PC-9 (cell line): ENCODE measurements at regions of chr9 and their contacts with region 1.

Region 1: GRCh38 chr9:99906403-99907207 is at the start of gene STX17:
- DNase-seq: peak; percentile 57 to 83
- H3K4me3 ChIP-seq: peak within 1 kb of the TSS; percentile 87
- H3K27ac ChIP-seq: peak within 1 kb of the TSS; percentile 86
- H3K4me1 ChIP-seq: peaks cover 16% of the 10 kb centered on the region
- H3K27me3 ChIP-seq: no peaks in the 10 kb centered on the region
- CTCF ChIP-seq: no peak
- total RNA-seq, gene STX17: 46.3 and 47.8 TPM in 2 replicates

Region 2: DNA sequence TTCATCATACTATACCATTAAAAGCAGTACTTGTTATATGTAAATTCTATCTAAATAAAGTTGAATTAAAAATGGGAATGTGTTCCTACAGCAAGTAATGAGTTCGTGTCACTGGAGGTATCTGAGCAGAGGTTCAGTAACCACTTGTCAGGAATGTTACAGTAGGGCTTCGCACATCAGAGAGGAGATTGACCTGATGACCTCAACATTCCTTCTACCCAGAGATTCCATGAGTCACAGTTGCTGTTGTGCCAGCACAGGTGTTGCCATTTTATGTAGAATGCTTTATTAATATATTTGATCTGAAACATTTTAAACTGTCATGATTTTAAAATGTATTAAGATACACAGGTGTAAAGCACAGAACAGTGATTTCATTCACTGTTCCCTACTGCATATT is 60.1 kb after region 1 on chr9:
- CTCF ChIA-PET with region 1: no interaction called
- POLR2A ChIA-PET with region 1: no interaction called
- intact Hi-C with region 1: loop called (anchors 2 kb)
- DNase-seq: peak; percentile 44 to 84
- H3K4me3 ChIP-seq: no peak overlapping the region
- H3K27ac ChIP-seq: peak overlapping the region; percentile 13; the same call in 1 of the 2 replicates
- H3K4me1 ChIP-seq: peaks cover 10% of the 10 kb centered on the region
- H3K27me3 ChIP-seq: no peaks in the 10 kb centered on the region
- CTCF ChIP-seq: no peak

Region 3: GRCh38 chr9:100098887-100099721 is 192.5 kb after region 1 on chr9 and contains the starts of genes ERP44 and INVS:
- CTCF ChIA-PET with region 1: no interaction called
- POLR2A ChIA-PET with region 1: no interaction called
- intact Hi-C with region 1: loop called (anchors 5 kb)
- DNase-seq: peak; percentile 97 to 98
- H3K4me3 ChIP-seq: peak within 1 kb of the TSS; percentile 87
- H3K27ac ChIP-seq: peak within 1 kb of the TSS; percentile 94
- H3K4me1 ChIP-seq: peaks cover 20% of the 10 kb centered on the region
- H3K27me3 ChIP-seq: no peaks in the 10 kb centered on the region
- CTCF ChIP-seq: no peak
- total RNA-seq, gene ERP44: 15.9 and 19.5 TPM in 2 replicates
- total RNA-seq, gene INVS: 20.1 and 24.0 TPM in 2 replicates